ENCODE measurements at regions of chr7 and their contacts with region 1.

Region 1: GRCh38 chr7:42219447-42219846 is 17.6 kb downstream of the GLI3 start:
- DNase-seq: peak; percentile 91
- H3K4me3 ChIP-seq: peak overlapping the region in 2 of 3 experiments; percentile 28 to 37
- H3K27ac ChIP-seq: peak overlapping the region; percentile 92
- H3K4me1 ChIP-seq: peaks cover 29% of the 10 kb centered on the region
- H3K27me3 ChIP-seq: no peaks in the 10 kb centered on the region
- CTCF ChIP-seq: no peak

Region 2: DNA sequence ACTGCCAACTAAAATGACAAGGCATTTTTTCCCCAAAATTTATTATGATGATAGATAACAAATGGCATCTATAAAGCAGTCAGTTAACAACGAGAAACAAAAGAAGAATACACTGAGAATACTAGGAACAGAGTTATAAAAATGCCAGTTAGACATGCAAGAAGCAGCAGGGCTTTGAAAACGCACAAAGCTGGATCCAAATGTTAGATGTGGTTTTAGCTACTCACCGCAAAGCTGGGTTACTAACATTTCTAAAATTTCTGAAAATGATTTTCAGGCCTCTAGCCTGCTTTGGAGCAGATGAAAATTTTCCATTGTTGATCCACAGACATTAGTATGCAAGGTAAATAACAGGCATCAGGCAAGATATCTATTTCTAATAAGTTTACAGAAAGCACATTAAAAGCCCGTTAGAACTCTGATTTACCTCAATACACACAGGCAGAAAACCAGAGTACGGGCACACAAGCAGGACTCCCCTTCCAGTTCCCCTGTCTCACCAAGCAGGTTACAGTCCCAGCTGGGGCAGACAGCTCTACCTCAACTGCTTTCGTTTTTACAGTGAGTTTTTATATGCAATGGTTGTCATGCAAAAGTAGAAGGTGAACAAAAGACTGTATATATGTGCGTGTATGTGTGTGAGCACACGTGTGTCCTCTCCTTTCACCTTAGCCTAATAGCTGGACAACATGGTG is 20.3 kb before region 1 on chr7:
- CTCF ChIA-PET with region 1: interaction called, 3 read pairs
- dilution Hi-C with region 1: no loop called
- in situ Hi-C with region 1: no loop called
- intact Hi-C with region 1: loop called (anchors 2 kb)
- DNase-seq: peak; percentile 55
- H3K4me3 ChIP-seq: no peak overlapping the region
- H3K27ac ChIP-seq: peak overlapping the region; percentile 78
- H3K4me1 ChIP-seq: peaks cover 32% of the 10 kb centered on the region
- H3K27me3 ChIP-seq: no peaks in the 10 kb centered on the region
- CTCF ChIP-seq: no peak

Region 3: GRCh38 chr7:42272793-42273665 is 53.6 kb after region 1 on chr7:
- CTCF ChIA-PET with region 1: no interaction called
- dilution Hi-C with region 1: no loop called
- in situ Hi-C with region 1: no loop called
- intact Hi-C with region 1: no loop called
- DNase-seq: peak; percentile 76
- H3K4me3 ChIP-seq: no peak overlapping the region
- H3K27ac ChIP-seq: peak overlapping the region; percentile 70
- H3K4me1 ChIP-seq: peaks cover 20% of the 10 kb centered on the region
- H3K27me3 ChIP-seq: no peaks in the 10 kb centered on the region
- CTCF ChIP-seq: peak; percentile 84 to 86

Measured in mammary epithelial cell (primary cell).